Activated CD8-positive, alpha-beta T cell treated with anti-CD3 and anti-CD28 coated beads for 36 hours (primary cell): ENCODE measurements at regions of chr6 and their contacts with region 1.

Region 1: GRCh38 chr6:150016324-150017185 is 8.8 kb downstream of the RAET1L start:
- DNase-seq: peak; percentile 65
- ATAC-seq: peak; percentile 76
- H3K4me3 Mint-ChIP-seq: no peak overlapping the region
- H3K27ac Mint-ChIP-seq: no peak overlapping the region
- H3K4me1 Mint-ChIP-seq: peaks cover 24% of the 10 kb centered on the region
- H3K27me3 Mint-ChIP-seq: peaks cover 63% of the 10 kb centered on the region
- CTCF ChIP-seq: peak; percentile 76

Region 2: GRCh38 chr6:149834513-149835481 is 181.8 kb before region 1 on chr6:
- CTCF ChIA-PET with region 1: interaction called, 7 read pairs
- POLR2A ChIA-PET with region 1: no interaction called
- intact Hi-C with region 1: loop called (anchors 5 kb)
- DNase-seq: peak; percentile 82
- ATAC-seq: peak; percentile 76
- H3K4me3 Mint-ChIP-seq: no peak overlapping the region
- H3K27ac Mint-ChIP-seq: no peak overlapping the region
- H3K4me1 Mint-ChIP-seq: no peaks in the 10 kb centered on the region
- H3K27me3 Mint-ChIP-seq: peaks cover 2% of the 10 kb centered on the region
- CTCF ChIP-seq: peak; percentile 91

Region 3: DNA sequence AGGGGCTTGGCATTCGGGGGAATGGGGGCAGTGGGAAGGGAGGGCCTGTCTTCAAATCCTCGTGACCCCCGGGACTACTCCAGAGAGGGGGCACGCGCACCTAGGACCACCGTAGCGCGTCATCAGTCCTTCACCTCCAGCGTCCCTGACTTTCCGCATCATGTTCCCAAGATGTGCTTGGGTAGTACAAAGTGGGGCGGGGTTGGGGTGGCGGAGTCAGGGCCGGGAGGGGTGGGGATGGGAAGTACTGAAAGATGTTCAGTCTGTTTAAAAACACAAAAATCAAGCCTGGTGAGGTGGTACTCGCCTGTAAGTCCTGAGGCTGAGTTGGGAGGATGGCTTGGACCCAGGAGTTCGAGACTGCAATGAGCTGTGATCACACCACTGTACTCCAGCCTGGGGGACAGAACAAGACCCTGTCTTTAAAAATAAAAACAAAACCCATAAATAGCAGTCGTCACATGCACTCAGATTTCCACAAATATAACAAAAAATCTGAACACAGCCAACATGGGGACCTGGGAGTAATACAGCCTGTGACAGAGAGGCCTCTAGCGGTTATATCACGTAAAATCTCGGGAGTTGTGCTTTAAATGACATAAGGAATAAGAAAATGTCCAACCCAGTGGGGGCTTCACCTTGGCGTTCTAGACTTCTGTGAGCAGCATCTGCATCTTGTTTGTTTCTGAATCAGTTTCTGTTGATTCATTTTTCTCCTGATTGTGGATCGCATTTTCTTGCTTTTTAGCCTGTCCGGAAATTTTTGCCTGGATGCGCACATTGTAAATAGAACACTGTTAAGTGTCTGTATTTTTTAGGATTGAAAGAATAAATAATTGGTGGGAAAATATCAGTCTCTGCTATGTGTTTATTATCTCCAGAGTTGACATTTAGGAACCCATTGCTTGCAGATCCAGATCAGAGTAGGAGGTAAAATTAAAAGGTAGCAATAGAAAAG is 151.7 kb before region 1 on chr6:
- CTCF ChIA-PET with region 1: interaction called, 3 read pairs
- POLR2A ChIA-PET with region 1: no interaction called
- intact Hi-C with region 1: loop called (anchors 5 kb)
- DNase-seq: peak; percentile 51
- ATAC-seq: peak; percentile 17
- H3K4me3 Mint-ChIP-seq: peak overlapping the region; percentile 46
- H3K27ac Mint-ChIP-seq: no peak overlapping the region
- H3K4me1 Mint-ChIP-seq: peaks cover 7% of the 10 kb centered on the region
- H3K27me3 Mint-ChIP-seq: peaks cover 18% of the 10 kb centered on the region
- CTCF ChIP-seq: peak; percentile 73

Region 4: GRCh38 chr6:149934249-149935156 is 82.1 kb before region 1 on chr6:
- CTCF ChIA-PET with region 1: interaction called, 16 read pairs
- POLR2A ChIA-PET with region 1: interaction called, 3 read pairs
- intact Hi-C with region 1: loop called (anchors 1 kb)
- DNase-seq: peak; percentile 89
- ATAC-seq: peak; percentile 53
- H3K4me3 Mint-ChIP-seq: no peak overlapping the region
- H3K27ac Mint-ChIP-seq: no peak overlapping the region
- H3K4me1 Mint-ChIP-seq: peaks cover 19% of the 10 kb centered on the region
- H3K27me3 Mint-ChIP-seq: peaks cover 71% of the 10 kb centered on the region
- CTCF ChIP-seq: peak; percentile 79

Region 5: GRCh38 chr6:149951626-149952025 is 64.9 kb before region 1 on chr6:
- CTCF ChIA-PET with region 1: interaction called, 10 read pairs
- POLR2A ChIA-PET with region 1: no interaction called
- intact Hi-C with region 1: no loop called
- DNase-seq: no peak
- ATAC-seq: no peak
- H3K4me3 Mint-ChIP-seq: no peak overlapping the region
- H3K27ac Mint-ChIP-seq: no peak overlapping the region
- H3K4me1 Mint-ChIP-seq: peaks cover 10% of the 10 kb centered on the region
- H3K27me3 Mint-ChIP-seq: peaks cover 59% of the 10 kb centered on the region
- CTCF ChIP-seq: no peak

Region 6: GRCh38 chr6:150004783-150005717 is 11.5 kb before region 1 on chr6:
- CTCF ChIA-PET with region 1: interaction called, 26 read pairs
- POLR2A ChIA-PET with region 1: no interaction called
- intact Hi-C with region 1: no loop called
- DNase-seq: peak; percentile 94
- ATAC-seq: peak; percentile 80
- H3K4me3 Mint-ChIP-seq: peak overlapping the region; percentile 79
- H3K27ac Mint-ChIP-seq: peak overlapping the region; percentile 73
- H3K4me1 Mint-ChIP-seq: peaks cover 60% of the 10 kb centered on the region
- H3K27me3 Mint-ChIP-seq: peaks cover 19% of the 10 kb centered on the region
- CTCF ChIP-seq: no peak

Region 7: GRCh38 chr6:150043096-150043495 is 26.5 kb after region 1 on chr6:
- CTCF ChIA-PET with region 1: no interaction called
- POLR2A ChIA-PET with region 1: no interaction called
- intact Hi-C with region 1: no loop called
- DNase-seq: no peak
- ATAC-seq: no peak
- H3K4me3 Mint-ChIP-seq: no peak overlapping the region
- H3K27ac Mint-ChIP-seq: no peak overlapping the region
- H3K4me1 Mint-ChIP-seq: peaks cover 4% of the 10 kb centered on the region
- H3K27me3 Mint-ChIP-seq: peaks cover 49% of the 10 kb centered on the region
- CTCF ChIP-seq: no peak

Region 8: GRCh38 chr6:150119173-150119572 is 102.6 kb after region 1 on chr6:
- CTCF ChIA-PET with region 1: no interaction called
- POLR2A ChIA-PET with region 1: no interaction called
- intact Hi-C with region 1: no loop called
- DNase-seq: no peak
- ATAC-seq: no peak
- H3K4me3 Mint-ChIP-seq: no peak overlapping the region
- H3K27ac Mint-ChIP-seq: peak overlapping the region; percentile 1
- H3K4me1 Mint-ChIP-seq: peaks cover 6% of the 10 kb centered on the region
- H3K27me3 Mint-ChIP-seq: peaks cover 4% of the 10 kb centered on the region
- CTCF ChIP-seq: no peak